ENCODE measurements at regions of chr6 and their contacts with region 1.

Region 1: DNA sequence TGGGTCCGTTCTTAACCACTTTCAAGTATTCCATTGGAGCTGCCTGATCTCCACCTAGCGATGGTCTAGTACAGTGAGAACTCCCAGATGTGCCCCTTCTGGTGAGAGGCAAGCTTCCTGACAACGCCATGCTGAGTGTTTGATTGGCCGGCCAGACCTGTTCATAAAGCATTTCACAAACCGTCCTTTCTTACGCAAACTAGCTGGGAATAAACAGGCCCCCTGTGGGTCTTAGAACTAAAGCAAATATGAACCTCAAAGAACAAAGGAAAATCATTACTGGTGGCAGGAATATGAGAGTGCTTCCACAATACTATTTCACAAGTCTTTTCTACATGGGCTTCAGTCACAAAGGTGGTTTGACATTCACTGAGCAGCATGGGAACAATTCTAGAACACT is 15.6 kb upstream of the GCNT2 start:
- DNase-seq: no peak
- H3K4me3 ChIP-seq: no peak overlapping the region
- H3K27ac ChIP-seq: no peak overlapping the region
- H3K4me1 ChIP-seq: no peaks in the 10 kb centered on the region
- H3K27me3 ChIP-seq: peaks cover 8% of the 10 kb centered on the region
- CTCF ChIP-seq: no peak

Region 2: DNA sequence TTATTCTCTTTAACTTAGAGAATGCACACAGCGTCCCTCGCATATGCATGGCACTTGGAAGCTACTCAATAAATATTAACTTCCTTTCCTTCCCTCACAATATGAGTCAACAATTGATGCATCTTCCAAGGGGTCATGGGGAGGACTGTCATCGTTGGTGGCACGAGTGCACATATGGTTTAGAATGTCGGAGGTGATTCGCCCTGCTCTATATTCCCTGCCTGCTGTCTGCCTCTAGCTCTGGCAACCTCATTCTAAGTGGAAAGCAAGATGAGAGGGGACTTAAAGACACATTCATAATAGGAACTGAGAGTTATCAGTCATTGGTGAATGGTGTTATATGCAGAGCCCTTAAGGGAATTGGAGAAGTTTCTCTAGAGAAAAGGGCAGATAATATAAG is 288.2 kb after region 1 on chr6:
- intact Hi-C with region 1: loop called (anchors 10 kb)
- DNase-seq: no peak
- H3K4me3 ChIP-seq: no peak overlapping the region
- H3K27ac ChIP-seq: no peak overlapping the region
- H3K4me1 ChIP-seq: no peaks in the 10 kb centered on the region
- H3K27me3 ChIP-seq: no peaks in the 10 kb centered on the region
- CTCF ChIP-seq: no peak